ENCODE measurements at regions of chr11 and their contacts with region 1.

Region 1: DNA sequence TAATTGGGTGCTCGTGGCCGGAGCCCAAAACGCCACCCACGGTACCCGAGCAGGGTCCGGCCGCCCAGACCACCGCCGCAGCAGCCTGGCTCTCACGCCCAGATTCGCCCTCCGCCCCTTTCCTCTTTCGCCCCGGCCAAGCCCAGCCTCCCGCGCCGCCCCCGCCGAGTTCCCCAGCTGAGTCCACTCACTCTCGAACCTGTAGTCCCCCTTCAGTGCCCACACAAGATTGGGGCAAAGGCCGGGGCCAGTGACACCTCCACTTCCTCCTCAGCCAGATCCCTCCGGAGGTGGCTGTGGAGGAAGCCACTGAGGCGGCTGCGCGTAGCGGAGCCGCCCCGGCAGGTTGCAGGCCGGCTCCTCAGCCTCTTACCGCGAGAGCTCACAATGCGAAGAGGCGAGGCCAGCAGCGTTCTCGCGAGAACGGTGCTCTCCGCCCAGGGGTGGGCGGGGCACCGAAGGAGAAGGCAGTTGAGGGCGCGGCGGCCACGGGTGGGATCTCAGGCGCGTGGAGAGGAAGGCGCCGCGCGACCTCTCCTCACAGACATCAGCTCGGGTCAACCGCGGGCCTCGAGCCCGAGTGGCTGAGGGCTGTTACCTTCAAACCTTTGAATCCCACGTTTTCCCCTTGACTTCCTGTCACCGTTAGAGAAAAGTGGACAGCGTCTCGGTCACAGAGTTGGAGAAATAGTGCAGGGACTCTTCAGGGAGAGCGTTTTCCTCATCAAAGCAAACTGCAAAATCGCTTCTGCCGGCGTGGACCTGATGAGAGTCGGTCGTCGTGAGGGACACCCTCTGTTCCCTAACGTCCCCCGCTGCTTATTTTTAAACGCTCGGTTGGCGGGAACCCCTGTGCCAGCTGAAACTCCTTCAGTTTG is at the start of gene BTBD10:
- H3K4me3 Mint-ChIP-seq: peak within 1 kb of the TSS; percentile 99
- H3K27ac Mint-ChIP-seq: peak within 1 kb of the TSS; percentile 100
- H3K4me1 Mint-ChIP-seq: peaks cover 35% of the 10 kb centered on the region
- H3K27me3 Mint-ChIP-seq: no peaks in the 10 kb centered on the region

Region 2: DNA sequence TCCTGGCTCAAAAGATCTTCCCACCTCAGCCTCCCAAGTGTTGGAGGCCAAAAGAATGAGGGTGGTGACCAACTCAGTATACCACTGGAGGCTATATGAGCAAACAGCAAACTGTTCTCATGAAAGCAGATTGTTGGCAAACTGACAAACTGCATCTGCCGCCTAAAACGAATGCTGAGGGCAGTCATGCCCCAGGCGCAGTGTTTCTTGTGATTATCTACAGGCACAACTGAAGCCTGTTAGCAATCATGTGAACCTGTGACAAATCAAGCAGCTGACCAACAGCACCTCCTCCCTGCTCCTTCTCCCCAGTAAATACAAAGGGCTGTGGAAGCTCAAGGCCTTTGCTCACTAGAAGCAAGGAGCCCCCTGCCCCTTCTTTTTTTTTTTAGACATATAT is 47.9 kb before region 1 on chr11:
- intact Hi-C with region 1: loop called (anchors 10 kb)
- H3K4me3 Mint-ChIP-seq: no peak overlapping the region
- H3K27ac Mint-ChIP-seq: no peak overlapping the region
- H3K4me1 Mint-ChIP-seq: no peaks in the 10 kb centered on the region
- H3K27me3 Mint-ChIP-seq: no peaks in the 10 kb centered on the region

Region 3: DNA sequence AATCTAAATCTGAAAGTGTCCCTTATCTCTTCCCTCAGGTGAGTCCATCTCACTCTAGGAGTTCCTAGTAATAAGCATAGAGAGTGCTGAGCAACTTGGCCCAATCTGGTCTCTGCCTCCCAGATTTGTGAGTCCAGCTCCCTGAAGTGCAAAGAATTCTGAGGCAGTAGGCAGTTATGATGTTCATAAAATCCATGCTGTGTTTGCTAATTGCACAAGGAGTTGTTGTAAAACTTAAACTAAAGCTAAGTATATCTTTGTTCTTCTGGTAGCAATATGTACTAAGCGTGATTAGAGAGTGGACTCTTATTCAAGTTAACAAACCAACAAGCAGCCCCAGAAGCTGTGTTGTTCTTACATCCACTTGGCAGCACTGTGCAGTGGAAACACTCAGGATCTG is 40.3 kb after region 1 on chr11:
- intact Hi-C with region 1: no loop called
- H3K4me3 Mint-ChIP-seq: no peak overlapping the region
- H3K27ac Mint-ChIP-seq: no peak overlapping the region
- H3K4me1 Mint-ChIP-seq: no peaks in the 10 kb centered on the region
- H3K27me3 Mint-ChIP-seq: no peaks in the 10 kb centered on the region

Region 4: DNA sequence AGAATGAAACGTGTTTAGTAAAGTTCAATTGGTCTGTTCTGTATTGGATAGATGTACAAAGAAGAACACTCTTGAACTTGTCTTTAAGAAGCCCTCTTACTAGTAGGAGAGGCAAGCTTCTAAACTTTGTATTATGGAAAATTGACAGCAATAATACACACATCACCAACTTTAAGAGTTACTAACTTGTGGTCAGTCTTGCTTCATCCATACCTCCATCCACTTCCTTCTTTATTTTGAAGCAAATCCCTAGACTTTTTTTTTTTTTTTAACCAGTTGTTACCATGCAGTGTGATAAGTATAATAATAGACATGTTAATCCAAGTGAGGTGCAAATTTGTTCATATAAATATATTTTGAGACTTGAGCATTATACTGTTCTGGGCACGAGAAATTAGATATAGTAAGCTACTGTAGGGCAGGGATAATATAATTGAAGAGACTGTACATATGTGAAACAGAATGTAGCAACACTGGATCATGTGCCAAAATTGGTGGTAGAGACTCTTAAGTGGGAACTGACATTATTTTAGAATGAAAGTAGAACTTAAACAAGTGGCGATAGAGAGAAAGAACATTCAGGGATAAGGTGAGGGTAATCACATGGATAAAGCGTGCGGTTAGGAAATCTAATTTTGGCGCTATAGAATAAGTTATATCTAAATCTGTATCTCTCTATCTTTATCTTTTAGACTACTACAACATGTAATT is 211.8 kb after region 1 on chr11:
- intact Hi-C with region 1: loop called (anchors 2 kb)
- H3K4me3 Mint-ChIP-seq: peak overlapping the region; percentile 68
- H3K27ac Mint-ChIP-seq: peak overlapping the region; percentile 80
- H3K4me1 Mint-ChIP-seq: peaks cover 45% of the 10 kb centered on the region
- H3K27me3 Mint-ChIP-seq: no peaks in the 10 kb centered on the region

Region 5: GRCh38 chr11:14119357-14119756 is 656.2 kb after region 1 on chr11:
- intact Hi-C with region 1: no loop called
- H3K4me3 Mint-ChIP-seq: no peak overlapping the region
- H3K27ac Mint-ChIP-seq: no peak overlapping the region
- H3K4me1 Mint-ChIP-seq: no peaks in the 10 kb centered on the region
- H3K27me3 Mint-ChIP-seq: no peaks in the 10 kb centered on the region

Measured in dendritic cell treated with granulocyte-macrophage colony-stimulating factor and Interleukin-4, amounts not matched to agents 40 ng/mL and 50 ng/mL, for 4 days (primary cell).